Thyroid gland (tissue), 4 donors: ENCODE measurements at regions of chr4 and their contacts with region 1.

Region 1: GRCh38 chr4:8403173-8403753 is 37.3 kb downstream of the ACOX3 start:
- DNase-seq: peak; percentile 85 to 88
- H3K4me3 ChIP-seq: no peak overlapping the region
- H3K27ac ChIP-seq: peak overlapping the region in 2 of 3 donors; percentile 46 to 67
- H3K4me1 ChIP-seq: peaks cover 15 to 24% of the 10 kb centered on the region in 2 donors
- H3K27me3 ChIP-seq: no peaks in the 10 kb centered on the region
- CTCF ChIP-seq: peak; percentile 80 to 96 (median 94)
- POLR2A ChIP-seq: no peak

Region 2: GRCh38 chr4:8241895-8242696 is 161.2 kb before region 1 on chr4:
- intact Hi-C with region 1: loop called (anchors 2 kb)
- DNase-seq: peak; percentile 80 to 84
- H3K4me3 ChIP-seq: no peak overlapping the region
- H3K27ac ChIP-seq: peak overlapping the region in 1 of 3 donors; percentile 22
- H3K4me1 ChIP-seq: peaks cover 18 to 26% of the 10 kb centered on the region in 2 donors
- H3K27me3 ChIP-seq: no peaks in the 10 kb centered on the region
- CTCF ChIP-seq: peak; percentile 88 to 98 (median 93)
- POLR2A ChIP-seq: no peak

Region 3: GRCh38 chr4:8315435-8316250 is 87.6 kb before region 1 on chr4:
- intact Hi-C with region 1: loop called (anchors 10 kb)
- DNase-seq: peak; percentile 99 to 100
- H3K4me3 ChIP-seq: no peak overlapping the region
- H3K27ac ChIP-seq: peak overlapping the region; percentile 78 to 88 (median 83)
- H3K4me1 ChIP-seq: peaks cover 40 to 43% of the 10 kb centered on the region in 2 donors
- H3K27me3 ChIP-seq: no peaks in the 10 kb centered on the region
- CTCF ChIP-seq: peak in 3 of 6 experiments; percentile 33 to 50 (median 34)
- POLR2A ChIP-seq: peak in 1 of 2 donors; percentile 4